Activated naive CD4-positive, alpha-beta T cell treated with anti-CD3 and anti-CD28 coated beads for 36 hours (primary cell): ENCODE measurements at regions of chr16 and their contacts with region 1.

Region 1: GRCh38 chr16:11816103-11816502 is 19.0 kb upstream of the ZC3H7A start:
- DNase-seq: no peak
- H3K4me3 Mint-ChIP-seq: no peak overlapping the region
- H3K27ac Mint-ChIP-seq: no peak overlapping the region
- H3K4me1 Mint-ChIP-seq: peaks cover 5% of the 10 kb centered on the region
- H3K27me3 Mint-ChIP-seq: no peaks in the 10 kb centered on the region

Region 2: DNA sequence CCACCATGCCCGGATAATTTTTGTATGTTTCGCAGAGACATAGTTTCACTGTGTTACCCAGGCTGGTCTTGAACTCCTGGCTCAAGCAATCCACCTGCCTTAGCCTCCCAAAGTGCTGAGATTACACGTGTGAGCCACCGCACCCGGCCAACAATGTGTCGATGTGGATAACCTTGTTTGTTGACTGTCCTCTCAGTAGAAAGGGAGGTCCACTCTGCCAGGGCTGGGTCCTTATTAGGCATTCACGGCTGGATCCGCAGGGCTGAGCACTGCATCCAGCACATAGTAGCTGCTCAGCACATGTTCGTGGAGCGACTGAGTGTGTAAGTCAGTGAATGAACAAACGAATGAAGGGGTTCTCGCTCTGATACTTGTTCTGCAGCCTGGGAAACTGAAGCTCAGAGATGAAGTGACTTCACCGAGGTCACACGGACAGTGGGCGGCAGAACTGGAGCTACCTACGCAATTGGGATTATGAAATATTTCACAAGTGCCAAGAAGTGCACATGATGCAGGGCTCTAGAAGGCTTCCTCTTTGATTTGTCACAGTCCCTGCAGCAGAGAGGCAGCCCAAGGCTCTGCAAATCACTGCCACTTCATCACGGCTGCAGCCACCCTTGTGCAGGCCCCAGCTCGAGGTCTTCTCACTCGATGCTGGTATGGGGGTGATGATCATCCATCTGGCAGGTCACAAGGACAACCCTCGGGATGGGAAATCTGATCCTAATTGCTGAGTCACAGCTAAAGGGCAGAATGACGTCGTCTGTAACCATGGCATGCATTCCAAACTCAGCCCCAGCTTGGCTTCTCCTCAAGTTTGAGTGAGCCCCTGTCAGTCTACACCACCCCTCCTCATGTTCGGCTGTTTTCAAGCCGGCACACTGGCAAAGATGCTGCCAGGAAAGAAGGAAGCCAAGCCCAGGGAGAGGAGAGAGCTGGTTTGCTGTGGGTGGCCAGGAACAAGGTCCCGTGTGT is 175.9 kb before region 1 on chr16:
- CTCF ChIA-PET with region 1: interaction called, 4 read pairs
- intact Hi-C with region 1: loop called (anchors 1 kb)
- DNase-seq: no peak
- H3K4me3 Mint-ChIP-seq: no peak overlapping the region
- H3K27ac Mint-ChIP-seq: no peak overlapping the region
- H3K4me1 Mint-ChIP-seq: peaks cover 11% of the 10 kb centered on the region
- H3K27me3 Mint-ChIP-seq: no peaks in the 10 kb centered on the region

Region 3: DNA sequence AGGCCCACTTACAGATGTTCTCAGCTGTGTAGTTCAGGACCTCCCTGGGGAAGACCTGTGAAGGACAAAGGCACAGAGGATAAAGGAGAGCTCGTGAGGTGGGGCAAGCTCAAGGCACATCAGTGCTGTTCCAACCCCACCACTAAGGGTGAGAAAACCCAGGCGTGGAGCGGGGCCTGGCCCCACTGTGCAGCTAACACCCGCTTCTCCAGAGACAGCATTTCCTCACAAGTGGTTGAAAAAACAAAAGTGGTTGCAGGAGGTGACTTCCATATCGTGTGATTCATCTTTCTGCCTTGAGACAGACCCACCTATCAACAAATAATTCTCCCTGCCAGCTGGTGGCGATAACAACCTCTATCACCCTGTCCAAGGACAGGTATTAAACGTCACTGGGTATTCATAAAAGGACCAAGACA is 117.8 kb before region 1 on chr16:
- CTCF ChIA-PET with region 1: interaction called, 5 read pairs
- intact Hi-C with region 1: loop called (anchors 2 kb)
- DNase-seq: peak; percentile 75
- H3K4me3 Mint-ChIP-seq: no peak overlapping the region
- H3K27ac Mint-ChIP-seq: peak overlapping the region; percentile 15
- H3K4me1 Mint-ChIP-seq: peaks cover 39% of the 10 kb centered on the region
- H3K27me3 Mint-ChIP-seq: no peaks in the 10 kb centered on the region